Activated naive CD4-positive, alpha-beta T cell treated with anti-CD3 and anti-CD28 coated beads for 36 hours (primary cell): ENCODE measurements at regions of chr6 and their contacts with region 1.

Region 1: DNA sequence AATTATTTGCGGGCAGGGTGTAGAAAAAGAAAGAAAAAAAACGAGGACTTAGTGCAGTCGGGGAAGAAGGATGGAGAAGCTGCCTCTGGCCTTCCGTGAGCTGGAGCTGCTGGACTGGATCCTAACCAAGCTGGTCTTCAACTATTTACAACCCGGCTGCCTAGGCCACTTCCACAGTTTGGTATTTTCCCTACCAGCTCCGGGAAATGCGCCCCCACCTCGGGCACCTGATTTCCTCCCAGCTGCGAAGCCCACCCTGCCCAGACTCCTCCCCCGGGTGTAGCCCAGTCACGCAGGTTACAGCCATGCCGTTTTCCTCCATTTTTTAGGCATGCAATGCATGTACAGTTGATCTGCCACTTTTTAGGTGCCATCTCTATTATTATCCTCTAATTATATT is 21.2 kb downstream of the THEMIS start:
- DNase-seq: peak; percentile 36
- H3K4me3 Mint-ChIP-seq: peak overlapping the region; percentile 67
- H3K27ac Mint-ChIP-seq: peak overlapping the region; percentile 56
- H3K4me1 Mint-ChIP-seq: peaks cover 70% of the 10 kb centered on the region
- H3K27me3 Mint-ChIP-seq: no peaks in the 10 kb centered on the region

Region 2: GRCh38 chr6:127811900-127812570 is 67.7 kb before region 1 on chr6:
- CTCF ChIA-PET with region 1: no interaction called
- intact Hi-C with region 1: no loop called
- DNase-seq: peak; percentile 30
- H3K4me3 Mint-ChIP-seq: peak overlapping the region; percentile 50
- H3K27ac Mint-ChIP-seq: peak overlapping the region; percentile 42
- H3K4me1 Mint-ChIP-seq: peaks cover 90% of the 10 kb centered on the region
- H3K27me3 Mint-ChIP-seq: no peaks in the 10 kb centered on the region

Region 3: GRCh38 chr6:127893541-127893940 is 13.9 kb after region 1 on chr6:
- CTCF ChIA-PET with region 1: no interaction called
- intact Hi-C with region 1: loop called (anchors 1 kb)
- DNase-seq: peak; percentile 55
- H3K4me3 Mint-ChIP-seq: peak overlapping the region; percentile 76
- H3K27ac Mint-ChIP-seq: peak overlapping the region; percentile 94
- H3K4me1 Mint-ChIP-seq: peaks cover 51% of the 10 kb centered on the region
- H3K27me3 Mint-ChIP-seq: no peaks in the 10 kb centered on the region

Region 4: DNA sequence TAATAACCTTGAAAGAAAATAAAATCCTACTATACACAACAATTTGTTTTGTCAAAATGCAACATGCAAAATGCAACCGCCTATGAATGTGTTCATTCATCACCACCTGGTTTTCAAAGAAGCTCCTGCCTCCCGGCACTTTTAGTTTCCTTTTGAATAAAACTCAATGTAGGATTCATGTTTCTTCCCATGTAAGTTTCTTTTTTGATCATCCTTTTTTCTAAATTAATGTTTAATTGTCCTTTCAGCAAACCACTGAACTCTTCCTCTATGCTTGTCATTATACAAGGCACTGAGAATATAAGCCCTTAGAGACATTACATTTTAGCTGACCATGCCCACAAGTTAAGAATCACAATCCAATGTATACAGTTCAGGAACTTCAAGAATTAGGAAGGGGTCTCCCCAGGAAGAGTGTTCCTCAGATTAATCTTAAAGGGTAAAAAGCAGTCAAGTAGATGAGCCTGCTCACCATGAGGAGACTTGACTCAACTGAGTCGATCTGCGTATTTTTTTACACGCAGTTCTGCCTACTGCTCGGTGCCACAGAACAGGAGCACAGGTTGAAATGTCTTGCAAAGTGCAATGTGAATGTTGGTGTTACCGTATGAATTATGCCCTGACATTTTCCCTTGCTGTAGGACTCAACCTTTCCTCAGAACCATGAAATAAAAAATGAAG is 28.4 kb after region 1 on chr6:
- CTCF ChIA-PET with region 1: no interaction called
- intact Hi-C with region 1: loop called (anchors 1 kb)
- DNase-seq: peak; percentile 60
- H3K4me3 Mint-ChIP-seq: peak overlapping the region; percentile 51
- H3K27ac Mint-ChIP-seq: peak overlapping the region; percentile 77
- H3K4me1 Mint-ChIP-seq: peaks cover 42% of the 10 kb centered on the region
- H3K27me3 Mint-ChIP-seq: no peaks in the 10 kb centered on the region

Region 5: DNA sequence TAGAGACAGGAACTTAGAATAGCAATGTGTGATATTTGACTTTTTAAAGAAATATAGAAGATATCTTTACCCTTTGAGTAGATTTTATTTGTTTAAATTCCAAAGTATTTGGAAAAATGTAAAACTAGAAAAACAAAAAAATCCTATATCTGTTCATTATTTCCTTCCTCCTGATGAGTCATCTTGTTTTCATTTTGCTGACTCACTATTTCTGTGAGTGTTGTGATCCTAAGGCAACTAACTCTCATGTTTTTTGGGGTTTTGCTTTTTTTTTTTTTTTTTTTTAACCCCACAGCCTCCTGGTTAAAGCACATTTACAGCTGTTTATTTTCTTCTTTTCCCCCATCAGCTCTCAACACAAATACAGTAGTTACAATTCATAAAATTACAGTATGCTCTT is 59.0 kb after region 1 on chr6:
- CTCF ChIA-PET with region 1: no interaction called
- intact Hi-C with region 1: loop called (anchors 1 kb)
- DNase-seq: no peak
- H3K4me3 Mint-ChIP-seq: no peak overlapping the region
- H3K27ac Mint-ChIP-seq: no peak overlapping the region
- H3K4me1 Mint-ChIP-seq: peaks cover 60% of the 10 kb centered on the region
- H3K27me3 Mint-ChIP-seq: no peaks in the 10 kb centered on the region

Region 6: GRCh38 chr6:128098000-128098581 is 218.4 kb after region 1 on chr6:
- CTCF ChIA-PET with region 1: no interaction called
- intact Hi-C with region 1: no loop called
- DNase-seq: no peak
- H3K4me3 Mint-ChIP-seq: no peak overlapping the region
- H3K27ac Mint-ChIP-seq: no peak overlapping the region
- H3K4me1 Mint-ChIP-seq: peaks cover 19% of the 10 kb centered on the region
- H3K27me3 Mint-ChIP-seq: no peaks in the 10 kb centered on the region

Region 7: GRCh38 chr6:128216917-128217316 is 337.2 kb after region 1 on chr6:
- CTCF ChIA-PET with region 1: no interaction called
- intact Hi-C with region 1: no loop called
- DNase-seq: no peak
- H3K4me3 Mint-ChIP-seq: no peak overlapping the region
- H3K27ac Mint-ChIP-seq: no peak overlapping the region
- H3K4me1 Mint-ChIP-seq: no peaks in the 10 kb centered on the region
- H3K27me3 Mint-ChIP-seq: no peaks in the 10 kb centered on the region

Region 8: GRCh38 chr6:129490521-129491245 is 1611.0 kb after region 1 on chr6:
- CTCF ChIA-PET with region 1: no interaction called
- intact Hi-C with region 1: loop called (anchors 5 kb)
- DNase-seq: peak; percentile 79
- H3K4me3 Mint-ChIP-seq: peak overlapping the region; percentile 67
- H3K27ac Mint-ChIP-seq: peak overlapping the region; percentile 100
- H3K4me1 Mint-ChIP-seq: peaks cover 70% of the 10 kb centered on the region
- H3K27me3 Mint-ChIP-seq: no peaks in the 10 kb centered on the region